T-cell (primary cell): ENCODE measurements at regions of chr2 and their contacts with region 1.

Region 1: DNA sequence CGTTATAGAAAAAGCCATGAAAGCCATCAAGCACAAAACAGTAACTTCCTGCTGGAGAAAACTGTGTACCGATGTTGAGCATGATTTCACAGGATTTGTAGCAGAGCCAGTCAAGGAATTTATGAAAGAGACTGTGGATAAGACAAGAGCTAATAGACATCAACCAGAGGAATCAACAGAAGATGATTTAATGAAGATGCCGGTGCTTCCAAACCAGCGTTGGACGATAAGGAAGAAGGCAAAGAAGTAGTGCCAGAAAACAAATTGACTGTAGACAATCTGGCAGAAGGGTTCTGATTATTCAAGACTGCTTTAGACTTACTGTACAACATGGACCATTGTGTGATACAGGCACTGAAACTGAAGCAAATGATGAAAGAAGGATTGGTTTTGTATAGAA is 49.5 kb upstream of the GAREM2 start:
- DNase-seq: no peak
- ATAC-seq: no peak
- H3K4me3 ChIP-seq: no peak overlapping the region
- H3K4me3 Mint-ChIP-seq: no peak overlapping the region
- H3K27ac ChIP-seq: no peak overlapping the region
- H3K27ac Mint-ChIP-seq: peak overlapping the region in 1 of 2 donors; percentile 39
- H3K4me1 ChIP-seq: no peaks in the 10 kb centered on the region
- H3K4me1 Mint-ChIP-seq: peaks cover 18 to 30% (median 21%) of the 10 kb centered on the region in 3 donors
- H3K27me3 ChIP-seq: no peaks in the 10 kb centered on the region
- H3K27me3 Mint-ChIP-seq: no peaks in the 10 kb centered on the region

Region 2: GRCh38 chr2:26284136-26284535 is 160.7 kb after region 1 on chr2:
- CTCF ChIA-PET with region 1: no interaction called
- POLR2A ChIA-PET with region 1: interaction called in 1 of 2 experiments, 14 read pairs
- DNase-seq: no peak
- ATAC-seq: no peak
- H3K4me3 ChIP-seq: no peak overlapping the region
- H3K4me3 Mint-ChIP-seq: no peak overlapping the region
- H3K27ac ChIP-seq: no peak overlapping the region
- H3K27ac Mint-ChIP-seq: no peak overlapping the region
- H3K4me1 ChIP-seq: no peaks in the 10 kb centered on the region
- H3K4me1 Mint-ChIP-seq: no peaks in the 10 kb centered on the region
- H3K27me3 ChIP-seq: no peaks in the 10 kb centered on the region
- H3K27me3 Mint-ChIP-seq: no peaks in the 10 kb centered on the region